ENCODE measurements at regions of chr4 and their contacts with region 1.

Region 1: DNA sequence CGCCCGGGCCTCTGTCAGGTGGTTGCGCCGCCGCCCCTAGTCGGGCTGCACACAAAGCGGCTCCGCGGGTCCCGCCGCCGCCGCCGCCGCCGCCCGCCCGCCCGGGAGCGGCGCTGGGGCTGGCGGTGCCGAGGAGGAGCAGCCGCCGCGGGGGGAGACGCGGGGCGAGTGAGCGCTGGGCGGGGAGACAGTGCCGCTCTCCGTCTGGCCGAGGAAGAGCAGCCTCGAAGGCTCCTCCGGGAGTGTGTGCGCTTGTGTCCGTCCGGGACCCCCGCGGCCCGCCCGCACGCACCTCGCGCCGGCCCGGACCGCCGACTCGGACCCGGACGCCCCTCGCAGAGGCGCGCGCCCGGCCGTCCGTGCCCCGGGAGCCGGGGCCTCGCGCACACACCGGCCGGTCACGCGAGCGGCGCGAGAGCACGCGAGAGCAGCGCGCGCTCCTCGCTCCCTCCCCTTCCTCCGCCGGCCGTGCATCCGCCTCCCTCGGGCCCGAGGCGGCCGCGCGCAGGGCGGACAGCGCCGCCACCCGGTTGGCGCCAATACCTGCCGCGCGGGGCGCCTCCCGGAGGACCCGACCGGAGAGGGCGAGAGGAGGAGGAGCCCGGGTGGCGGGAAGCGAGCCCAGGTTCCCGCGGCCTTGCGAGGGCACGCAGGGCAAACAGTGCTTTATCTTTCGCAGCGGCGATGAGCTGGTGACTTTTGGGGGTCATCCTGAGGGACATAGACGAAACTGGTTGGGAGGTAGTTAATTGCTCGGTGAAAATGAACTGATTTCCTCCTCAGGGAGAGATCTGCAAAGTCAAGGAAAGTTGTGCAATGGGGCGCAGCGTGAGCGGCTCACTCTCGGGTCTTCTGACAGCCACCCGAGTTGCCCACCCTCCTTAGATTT is at the start of gene PDS5A:
- DNase-seq: peak; percentile 93
- H3K4me3 Mint-ChIP-seq: peak within 1 kb of the TSS; percentile 87
- H3K27ac Mint-ChIP-seq: peak within 1 kb of the TSS; percentile 90
- H3K4me1 Mint-ChIP-seq: peaks cover 41% of the 10 kb centered on the region
- H3K27me3 Mint-ChIP-seq: no peaks in the 10 kb centered on the region
- total RNA-seq, gene PDS5A: 97.8 to 99.6 TPM

Region 2: GRCh38 chr4:39469429-39470077 is 508.2 kb before region 1 on chr4:
- CTCF ChIA-PET with region 1: interaction called, 14 read pairs
- POLR2A ChIA-PET with region 1: interaction called, 5 read pairs
- DNase-seq: no peak
- H3K4me3 Mint-ChIP-seq: no peak overlapping the region
- H3K27ac Mint-ChIP-seq: peak overlapping the region; percentile 38
- H3K4me1 Mint-ChIP-seq: peaks cover 12% of the 10 kb centered on the region
- H3K27me3 Mint-ChIP-seq: no peaks in the 10 kb centered on the region

Region 3: GRCh38 chr4:39823191-39823590 is 154.5 kb before region 1 on chr4:
- CTCF ChIA-PET with region 1: no interaction called
- POLR2A ChIA-PET with region 1: no interaction called
- DNase-seq: no peak
- H3K4me3 Mint-ChIP-seq: no peak overlapping the region
- H3K27ac Mint-ChIP-seq: no peak overlapping the region
- H3K4me1 Mint-ChIP-seq: peaks cover 3% of the 10 kb centered on the region
- H3K27me3 Mint-ChIP-seq: no peaks in the 10 kb centered on the region

Measured in activated CD4-positive, alpha-beta memory T cell treated with anti-CD3 and anti-CD28 coated beads, Interleukin-2, amount 10 ng/mL, durations not matched to agents 7 days and 5 days (primary cell).